HepG2 (cell line): ENCODE measurements at regions of chr3 and their contacts with region 1.

Region 1: GRCh38 chr3:50211930-50212329 is 6.9 kb downstream of the SLC38A3 start:
- DNase-seq: no peak
- ATAC-seq: no peak
- H3K4me3 ChIP-seq: peak overlapping the region in 1 of 3 experiments; percentile 17; a peak in 1 of 6 replicates
- H3K27ac ChIP-seq: peak overlapping the region; percentile 99
- H3K4me1 ChIP-seq: peaks cover 74% of the 10 kb centered on the region
- H3K27me3 ChIP-seq: no peaks in the 10 kb centered on the region
- CTCF ChIP-seq: no peak
- EP300 ChIP-seq: no peak
- POLR2A ChIP-seq: no peak
- RAD21 ChIP-seq: no peak

Region 2: GRCh38 chr3:50088725-50089608 is 123.0 kb before region 1 on chr3 and contains the start of gene RBM5:
- CTCF ChIA-PET with region 1: no interaction called
- POLR2A ChIA-PET with region 1: no interaction called
- in situ Hi-C with region 1: no loop called
- intact Hi-C with region 1: no loop called
- DNase-seq: peak; percentile 89
- ATAC-seq: peak; percentile 100
- H3K4me3 ChIP-seq: peak within 1 kb of the TSS; percentile 91 to 100 (median 99)
- H3K27ac ChIP-seq: peak within 1 kb of the TSS; percentile 99
- H3K4me1 ChIP-seq: peaks cover 32% of the 10 kb centered on the region
- H3K27me3 ChIP-seq: no peaks in the 10 kb centered on the region; a peak in 1 of 5 replicates
- CTCF ChIP-seq: no peak
- EP300 ChIP-seq: peak in 1 of 2 experiments; percentile 32; a peak in 2 of 4 replicates
- POLR2A ChIP-seq: peak; percentile 87 to 90
- RAD21 ChIP-seq: no peak
- total RNA-seq, gene RBM5: 65.0 and 106 TPM in 2 replicates

Region 3: DNA sequence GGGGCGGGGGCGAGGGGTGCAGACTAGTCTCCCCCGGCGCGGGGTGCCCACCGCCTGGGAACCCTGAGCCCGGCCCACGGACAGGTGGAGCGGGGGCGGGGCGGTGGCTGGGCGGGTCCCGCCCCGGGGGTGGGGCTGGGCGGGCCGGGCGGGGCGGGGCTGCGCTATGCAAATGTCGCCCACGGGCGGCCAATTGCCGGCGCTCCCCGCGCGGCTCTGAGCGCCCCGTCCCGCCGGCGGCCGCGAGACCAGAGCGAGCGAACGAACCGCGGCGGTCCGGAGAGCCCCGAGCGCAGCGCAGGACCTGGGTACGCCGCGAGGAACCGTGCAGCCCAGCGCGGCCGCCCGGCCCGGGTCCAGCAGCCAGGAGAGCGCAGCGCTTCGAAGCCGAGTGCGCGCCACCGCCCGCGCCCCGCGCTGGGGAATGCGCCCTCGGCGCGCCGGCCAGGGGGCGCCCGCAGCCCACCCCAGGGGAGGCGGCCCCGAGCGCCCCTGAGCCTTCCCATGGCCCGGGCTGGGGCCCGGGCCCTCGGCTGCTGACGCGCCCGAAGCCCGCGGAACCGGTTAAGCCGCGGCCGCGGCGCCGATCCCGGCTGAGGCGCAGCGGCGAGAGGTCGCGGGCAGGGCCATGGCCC is 57.0 kb before region 1 on chr3 and contains the start of gene SEMA3F:
- CTCF ChIA-PET with region 1: no interaction called
- POLR2A ChIA-PET with region 1: interaction called, 17 read pairs
- in situ Hi-C with region 1: no loop called
- intact Hi-C with region 1: no loop called
- DNase-seq: peak; percentile 32
- ATAC-seq: peak; percentile 76
- H3K4me3 ChIP-seq: peak within 1 kb of the TSS; percentile 67 to 84 (median 81)
- H3K27ac ChIP-seq: no peak within 1 kb of the TSS
- H3K4me1 ChIP-seq: peaks cover 75% of the 10 kb centered on the region
- H3K27me3 ChIP-seq: peaks cover 0 to 15% of the 10 kb centered on the region in 2 experiments; a peak in 2 of 5 replicates
- CTCF ChIP-seq: peak; percentile 53; the same call in 1 of the 2 replicates
- EP300 ChIP-seq: no peak
- POLR2A ChIP-seq: 0 out of 4 replicates have a peak, but pooled peaks of 1 of the 2 experiments have one; percentile 32
- RAD21 ChIP-seq: peak; percentile 97
- total RNA-seq, gene SEMA3F: 3.6 and 7.6 TPM in 2 replicates

Region 4: DNA sequence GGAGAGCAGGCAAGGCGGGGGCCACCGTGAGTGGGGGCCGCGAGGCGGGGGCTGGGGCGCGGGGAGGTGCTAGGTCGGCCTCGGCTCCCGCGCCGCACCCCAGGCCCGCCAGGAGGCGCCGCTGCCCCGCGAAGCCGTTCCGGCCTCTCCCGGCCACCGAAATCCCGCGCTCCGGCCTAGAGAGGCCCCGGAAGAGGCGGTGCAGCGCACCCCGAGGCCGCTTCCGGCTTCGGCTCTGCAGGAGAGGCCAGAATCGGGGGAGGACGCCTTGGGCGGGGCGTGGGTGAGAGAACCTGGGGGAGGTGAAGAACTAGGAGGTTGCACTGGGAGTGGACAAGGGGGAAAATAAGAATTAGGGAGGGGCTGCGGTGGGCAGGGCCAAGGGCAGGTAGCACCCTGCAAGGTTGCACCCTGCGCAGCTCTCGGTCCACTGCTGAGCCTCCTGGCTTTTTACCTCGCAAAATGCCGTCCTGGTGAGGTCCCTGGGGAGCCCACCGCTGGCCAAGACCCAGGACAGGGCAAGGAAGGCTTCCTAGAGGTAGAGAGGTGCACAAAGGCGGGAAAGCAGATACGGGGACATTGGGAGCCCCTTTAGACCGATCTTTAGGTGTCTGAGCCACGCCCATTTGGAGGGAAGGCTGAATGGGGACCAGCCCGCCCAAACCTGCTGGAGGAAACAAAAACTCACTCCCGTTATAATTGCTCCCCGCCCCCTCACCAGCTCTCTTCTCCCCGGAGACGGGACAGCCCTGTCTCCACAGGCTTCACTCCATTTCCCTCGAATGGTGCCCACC is 15.7 kb after region 1 on chr3:
- CTCF ChIA-PET with region 1: no interaction called
- POLR2A ChIA-PET with region 1: interaction called, 625 read pairs
- in situ Hi-C with region 1: no loop called
- intact Hi-C with region 1: no loop called
- DNase-seq: peak; percentile 82
- ATAC-seq: peak; percentile 78
- H3K4me3 ChIP-seq: peak overlapping the region; percentile 75 to 88 (median 84)
- H3K27ac ChIP-seq: peak overlapping the region; percentile 70
- H3K4me1 ChIP-seq: peaks cover 73% of the 10 kb centered on the region
- H3K27me3 ChIP-seq: no peaks in the 10 kb centered on the region
- CTCF ChIP-seq: peak; percentile 89
- EP300 ChIP-seq: peak; percentile 20 to 47; a peak in 2 of 4 replicates
- POLR2A ChIP-seq: no peak
- RAD21 ChIP-seq: peak; percentile 99

Region 5: GRCh38 chr3:50235716-50236496 is 24.0 kb after region 1 on chr3 and contains the start of gene GNAI2:
- CTCF ChIA-PET with region 1: no interaction called
- POLR2A ChIA-PET with region 1: interaction called, 69 read pairs
- in situ Hi-C with region 1: no loop called
- intact Hi-C with region 1: no loop called
- DNase-seq: peak; percentile 94
- ATAC-seq: peak; percentile 93
- H3K4me3 ChIP-seq: peak within 1 kb of the TSS; percentile 85 to 93 (median 87)
- H3K27ac ChIP-seq: peak within 1 kb of the TSS; percentile 61
- H3K4me1 ChIP-seq: peaks cover 59% of the 10 kb centered on the region
- H3K27me3 ChIP-seq: no peaks in the 10 kb centered on the region; a peak in 1 of 5 replicates
- CTCF ChIP-seq: no peak; the same call in 1 of the 2 replicates
- EP300 ChIP-seq: no peak
- POLR2A ChIP-seq: peak; percentile 66 to 92
- RAD21 ChIP-seq: peak; percentile 51
- total RNA-seq, gene GNAI2: 34.5 and 51.1 TPM in 2 replicates

Region 6: GRCh38 chr3:50267280-50267913 is 55.5 kb after region 1 on chr3:
- CTCF ChIA-PET with region 1: no interaction called
- POLR2A ChIA-PET with region 1: interaction called, 82 read pairs
- in situ Hi-C with region 1: no loop called
- intact Hi-C with region 1: no loop called
- DNase-seq: no peak
- ATAC-seq: no peak
- H3K4me3 ChIP-seq: peak overlapping the region; percentile 9 to 83 (median 44); a peak in 5 of 6 replicates
- H3K27ac ChIP-seq: peak overlapping the region; percentile 88
- H3K4me1 ChIP-seq: peaks cover 88% of the 10 kb centered on the region
- H3K27me3 ChIP-seq: no peaks in the 10 kb centered on the region; a peak in 1 of 5 replicates
- CTCF ChIP-seq: no peak
- EP300 ChIP-seq: no peak
- POLR2A ChIP-seq: no peak
- RAD21 ChIP-seq: no peak

Region 7: DNA sequence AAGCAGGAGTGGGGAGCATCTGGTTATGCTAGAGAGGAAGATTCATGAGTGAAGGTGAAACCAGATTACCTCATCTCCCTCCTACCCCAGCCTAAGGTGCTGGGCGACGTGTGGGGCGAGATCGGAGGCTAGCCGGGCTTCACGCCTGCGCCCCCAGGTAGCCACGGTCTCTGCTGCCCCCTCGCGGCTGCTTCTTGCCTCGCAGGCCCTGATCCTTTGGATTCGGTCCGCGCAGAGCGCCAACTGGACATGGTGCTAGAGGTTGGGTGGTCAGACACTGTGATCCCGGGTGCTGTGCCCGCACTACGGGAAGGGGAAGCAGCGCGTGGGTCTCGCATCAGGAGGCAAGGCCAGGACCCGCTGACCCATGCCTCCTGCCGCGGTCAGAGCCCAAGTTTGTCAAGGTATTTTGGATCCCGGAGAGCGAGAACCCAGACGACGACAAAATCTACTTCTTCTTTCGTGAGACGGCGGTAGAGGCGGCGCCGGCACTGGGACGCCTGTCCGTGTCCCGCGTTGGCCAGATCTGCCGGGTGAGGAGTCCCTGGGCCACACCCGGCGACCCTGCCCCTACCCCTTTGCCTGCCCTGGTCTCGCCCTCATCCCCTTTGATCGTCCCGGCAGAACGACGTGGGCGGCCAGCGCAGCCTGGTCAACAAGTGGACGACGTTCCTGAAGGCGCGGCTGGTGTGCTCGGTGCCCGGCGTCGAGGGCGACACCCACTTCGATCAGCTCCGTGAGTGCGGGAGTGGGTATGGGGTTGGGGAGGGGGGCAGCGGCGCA is 61.2 kb after region 1 on chr3:
- CTCF ChIA-PET with region 1: no interaction called
- POLR2A ChIA-PET with region 1: interaction called, 16 read pairs
- in situ Hi-C with region 1: no loop called
- intact Hi-C with region 1: no loop called
- DNase-seq: peak; percentile 64
- ATAC-seq: peak; percentile 13
- H3K4me3 ChIP-seq: no peak overlapping the region
- H3K27ac ChIP-seq: peak overlapping the region; percentile 88
- H3K4me1 ChIP-seq: peaks cover 54% of the 10 kb centered on the region
- H3K27me3 ChIP-seq: no peaks in the 10 kb centered on the region; a peak in 1 of 5 replicates
- CTCF ChIP-seq: peak; percentile 99
- EP300 ChIP-seq: 0 out of 4 replicates have a peak, but pooled peaks of 1 of the 2 experiments have one; percentile 26
- POLR2A ChIP-seq: no peak
- RAD21 ChIP-seq: peak; percentile 99

Region 8: GRCh38 chr3:50298836-50299637 is 87.1 kb after region 1 on chr3 and contains the starts of genes HYAL3 and NAA80:
- CTCF ChIA-PET with region 1: no interaction called
- POLR2A ChIA-PET with region 1: interaction called, 13 read pairs
- in situ Hi-C with region 1: no loop called
- intact Hi-C with region 1: no loop called
- DNase-seq: no peak
- ATAC-seq: peak; percentile 53
- H3K4me3 ChIP-seq: peak within 1 kb of the TSS; percentile 66 to 91 (median 89)
- H3K27ac ChIP-seq: peak within 1 kb of the TSS; percentile 87
- H3K4me1 ChIP-seq: peaks cover 52% of the 10 kb centered on the region
- H3K27me3 ChIP-seq: no peaks in the 10 kb centered on the region; a peak in 1 of 5 replicates
- CTCF ChIP-seq: peak; percentile 54
- EP300 ChIP-seq: no peak
- POLR2A ChIP-seq: peak in 1 of 2 experiments; percentile 79; a peak in 2 of 4 replicates
- RAD21 ChIP-seq: peak; percentile 67; the same call in 1 of the 2 replicates
- total RNA-seq, gene HYAL3: 5.5 and 5.9 TPM in 2 replicates
- total RNA-seq, gene NAA80: 1.5 and 3.4 TPM in 2 replicates